ENCODE measurements at regions of chr12 and their contacts with region 1.

Region 1: GRCh38 chr12:42237052-42237852 is 796 bp downstream of the YAF2 start:
- DNase-seq: peak; percentile 74 to 86
- ATAC-seq: peak; percentile 75 to 86 (median 76)
- H3K4me3 ChIP-seq: peak overlapping the region; percentile 56
- H3K4me3 Mint-ChIP-seq: peak overlapping the region; percentile 90
- H3K27ac ChIP-seq: peak overlapping the region; percentile 74
- H3K27ac Mint-ChIP-seq: peak overlapping the region; percentile 89 to 94
- H3K4me1 ChIP-seq: peaks cover 9% of the 10 kb centered on the region
- H3K4me1 Mint-ChIP-seq: peaks cover 39 to 40% of the 10 kb centered on the region in 2 donors
- H3K27me3 ChIP-seq: no peaks in the 10 kb centered on the region
- H3K27me3 Mint-ChIP-seq: no peaks in the 10 kb centered on the region
- CTCF ChIP-seq: peak; percentile 30

Region 2: DNA sequence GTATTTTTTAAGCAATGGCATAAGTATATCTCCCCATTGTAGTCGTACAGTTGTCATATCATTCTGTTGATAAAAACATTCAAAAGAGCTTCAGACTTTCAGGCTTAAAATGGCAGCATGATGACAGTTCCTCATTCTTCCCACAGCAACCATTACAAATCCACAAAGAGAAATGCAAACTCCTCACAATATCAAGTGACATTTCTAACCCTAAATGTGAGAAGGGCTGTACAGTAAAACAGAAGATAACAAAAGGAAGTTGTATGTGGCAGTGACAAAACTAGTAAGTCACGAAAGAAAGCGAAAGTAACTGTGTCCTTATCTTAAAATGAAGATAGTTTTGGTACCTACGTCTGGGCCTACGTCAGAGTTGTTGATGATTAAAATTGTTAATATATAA is 139.3 kb before region 1 on chr12:
- intact Hi-C with region 1: loop called (anchors 5 kb)
- DNase-seq: peak in 1 of 2 donors; percentile 79
- ATAC-seq: peak; percentile 71 to 88 (median 77)
- H3K4me3 ChIP-seq: peak overlapping the region; percentile 42
- H3K4me3 Mint-ChIP-seq: peak overlapping the region; percentile 92
- H3K27ac ChIP-seq: peak overlapping the region; percentile 96
- H3K27ac Mint-ChIP-seq: peak overlapping the region; percentile 95 to 98
- H3K4me1 ChIP-seq: peaks cover 7% of the 10 kb centered on the region
- H3K4me1 Mint-ChIP-seq: peaks cover 42 to 43% of the 10 kb centered on the region in 2 donors
- H3K27me3 ChIP-seq: no peaks in the 10 kb centered on the region
- H3K27me3 Mint-ChIP-seq: no peaks in the 10 kb centered on the region
- CTCF ChIP-seq: no peak

Region 3: GRCh38 chr12:42144408-42145196 is 92.7 kb before region 1 on chr12 and contains the start of gene GXYLT1:
- intact Hi-C with region 1: loop called (anchors 1 kb)
- DNase-seq: peak; percentile 79 to 86
- ATAC-seq: peak; percentile 90 to 94 (median 91)
- H3K4me3 ChIP-seq: peak within 1 kb of the TSS; percentile 73
- H3K4me3 Mint-ChIP-seq: peak within 1 kb of the TSS; percentile 96
- H3K27ac ChIP-seq: peak within 1 kb of the TSS; percentile 46
- H3K27ac Mint-ChIP-seq: peak within 1 kb of the TSS; percentile 83 to 85
- H3K4me1 ChIP-seq: peaks cover 14% of the 10 kb centered on the region
- H3K4me1 Mint-ChIP-seq: peaks cover 31 to 40% of the 10 kb centered on the region in 2 donors
- H3K27me3 ChIP-seq: no peaks in the 10 kb centered on the region
- H3K27me3 Mint-ChIP-seq: no peaks in the 10 kb centered on the region
- CTCF ChIP-seq: no peak
- total RNA-seq, gene GXYLT1: 12.3 to 13.0 (median 12.7) TPM

Region 4: DNA sequence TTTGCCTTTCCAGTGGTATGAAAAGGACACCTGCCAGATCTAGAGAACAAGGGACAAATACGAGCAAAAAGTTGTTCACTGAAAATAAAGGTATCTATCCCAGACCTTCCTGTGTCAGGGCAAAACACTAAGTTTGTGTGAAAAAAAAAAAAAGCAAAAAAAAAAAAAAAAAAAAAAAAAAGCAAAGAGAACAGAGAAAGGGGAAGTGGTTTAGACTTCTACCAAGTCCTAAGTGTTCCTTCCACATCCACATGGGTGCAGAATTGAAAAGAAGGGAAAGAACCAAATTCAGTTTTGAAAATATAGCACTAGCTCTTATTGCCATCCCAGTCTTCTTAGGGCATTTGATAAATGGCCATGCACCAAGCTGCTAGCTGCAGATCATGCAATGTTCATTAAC is 46.9 kb after region 1 on chr12:
- intact Hi-C with region 1: no loop called
- DNase-seq: no peak
- ATAC-seq: no peak
- H3K4me3 ChIP-seq: no peak overlapping the region
- H3K4me3 Mint-ChIP-seq: no peak overlapping the region
- H3K27ac ChIP-seq: no peak overlapping the region
- H3K27ac Mint-ChIP-seq: no peak overlapping the region
- H3K4me1 ChIP-seq: no peaks in the 10 kb centered on the region
- H3K4me1 Mint-ChIP-seq: no peaks in the 10 kb centered on the region
- H3K27me3 ChIP-seq: no peaks in the 10 kb centered on the region
- H3K27me3 Mint-ChIP-seq: peaks cover 8 to 11% of the 10 kb centered on the region in 2 donors
- CTCF ChIP-seq: no peak

Region 5: GRCh38 chr12:42325653-42326474 is 88.6 kb after region 1 on chr12 and contains the starts of genes PPHLN1 and ZCRB1:
- intact Hi-C with region 1: loop called (anchors 1 kb)
- DNase-seq: peak; percentile 77 to 87
- ATAC-seq: peak; percentile 87 to 95 (median 92)
- H3K4me3 ChIP-seq: peak within 1 kb of the TSS; percentile 82
- H3K4me3 Mint-ChIP-seq: peak within 1 kb of the TSS; percentile 99
- H3K27ac ChIP-seq: peak within 1 kb of the TSS; percentile 81
- H3K27ac Mint-ChIP-seq: peak within 1 kb of the TSS; percentile 96 to 99
- H3K4me1 ChIP-seq: peaks cover 20% of the 10 kb centered on the region
- H3K4me1 Mint-ChIP-seq: peaks cover 49 to 54% of the 10 kb centered on the region in 2 donors
- H3K27me3 ChIP-seq: no peaks in the 10 kb centered on the region
- H3K27me3 Mint-ChIP-seq: no peaks in the 10 kb centered on the region
- CTCF ChIP-seq: no peak
- total RNA-seq, gene PPHLN1: 98.2 to 101 (median 101) TPM
- total RNA-seq, gene ZCRB1: 28.0 to 35.9 (median 33.8) TPM

Region 6: GRCh38 chr12:42332301-42333285 is 95.3 kb after region 1 on chr12:
- intact Hi-C with region 1: loop called (anchors 1 kb)
- DNase-seq: peak in 1 of 2 donors; percentile 70
- ATAC-seq: peak; percentile 63 to 70 (median 67)
- H3K4me3 ChIP-seq: no peak overlapping the region
- H3K4me3 Mint-ChIP-seq: no peak overlapping the region
- H3K27ac ChIP-seq: no peak overlapping the region
- H3K27ac Mint-ChIP-seq: peak overlapping the region in 1 of 2 donors; percentile 64
- H3K4me1 ChIP-seq: peaks cover 10% of the 10 kb centered on the region
- H3K4me1 Mint-ChIP-seq: peaks cover 49 to 54% of the 10 kb centered on the region in 2 donors
- H3K27me3 ChIP-seq: no peaks in the 10 kb centered on the region
- H3K27me3 Mint-ChIP-seq: no peaks in the 10 kb centered on the region
- CTCF ChIP-seq: peak; percentile 72

Measured in natural killer cell (primary cell).